ENCODE measurements at regions of chr17 and their contacts with region 1.

Region 1: DNA sequence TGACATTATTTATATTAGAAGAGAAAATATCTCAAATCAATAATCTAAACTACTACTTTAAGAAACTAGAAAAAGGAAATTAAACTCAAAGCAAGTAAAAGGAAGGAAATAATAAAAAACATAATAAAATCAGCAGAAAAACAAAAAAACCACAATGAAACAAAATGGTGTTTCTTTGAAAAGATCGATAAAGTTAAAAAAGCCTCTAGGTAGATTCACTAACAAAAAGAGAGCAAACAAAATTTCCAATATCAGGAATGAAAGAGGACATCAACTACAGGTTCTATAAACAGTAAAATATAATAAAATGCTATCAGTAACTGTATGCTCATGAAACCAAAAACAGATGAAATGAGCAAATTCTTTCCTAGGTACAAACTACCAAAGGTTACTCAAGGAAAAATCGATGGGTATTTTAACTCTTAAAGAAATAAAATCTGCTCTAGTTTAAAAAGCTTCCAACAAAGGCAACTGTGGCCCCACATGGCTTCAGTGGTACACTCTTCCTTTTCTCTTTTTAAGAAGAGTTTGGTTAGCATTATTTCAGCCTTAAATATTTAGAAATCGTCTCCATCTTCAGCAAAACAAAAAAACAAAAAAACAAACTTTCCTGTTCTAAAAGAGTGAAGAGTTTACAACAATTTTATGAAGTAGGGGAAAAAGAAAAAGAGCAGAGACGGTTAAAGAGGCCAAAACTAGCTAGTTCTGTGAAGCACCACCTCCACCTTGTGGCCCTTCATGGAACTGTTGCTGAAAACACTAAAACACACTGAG is 102.2 kb downstream of the TRIM37 start:
- DNase-seq: peak; percentile 63
- H3K4me3 ChIP-seq: no peak overlapping the region; a peak in 1 of 4 replicates
- H3K27ac ChIP-seq: no peak overlapping the region
- H3K4me1 ChIP-seq: peaks cover 0 to 5% of the 10 kb centered on the region in 2 experiments; a peak in 2 of 4 replicates
- H3K27me3 ChIP-seq: no peaks in the 10 kb centered on the region
- CTCF ChIP-seq: peak; percentile 100
- EP300 ChIP-seq: no peak
- RAD21 ChIP-seq: peak; percentile 98

Region 2: DNA sequence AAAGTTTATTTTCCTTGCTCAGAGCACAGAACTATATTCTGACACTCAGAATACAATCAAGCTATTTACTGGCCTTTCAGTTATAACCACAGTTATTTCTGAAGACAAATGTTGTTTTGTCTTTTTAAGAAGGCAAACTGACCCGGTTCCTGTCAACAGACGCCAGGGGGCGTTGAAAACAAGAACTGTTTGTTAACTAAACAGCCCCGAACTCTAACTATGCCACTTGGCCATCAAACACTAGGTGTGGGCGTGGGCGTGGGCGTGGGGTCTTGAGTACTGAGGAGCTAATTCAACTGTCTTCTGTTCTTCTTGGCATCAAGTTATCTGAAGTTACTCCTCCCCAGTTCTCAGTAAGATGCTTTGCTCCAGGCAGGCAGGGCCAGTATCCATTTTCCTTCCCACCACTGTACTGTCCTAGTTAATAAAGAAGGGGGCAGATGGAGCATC is 426.9 kb before region 1 on chr17:
- CTCF ChIA-PET with region 1: interaction called, 66 read pairs
- POLR2A ChIA-PET with region 1: no interaction called
- DNase-seq: peak; percentile 56
- H3K4me3 ChIP-seq: no peak overlapping the region; a peak in 1 of 4 replicates
- H3K27ac ChIP-seq: no peak overlapping the region
- H3K4me1 ChIP-seq: no peaks in the 10 kb centered on the region
- H3K27me3 ChIP-seq: 0 out of 2 replicates have a peak, but pooled peaks cover 4% of the 10 kb centered on the region
- CTCF ChIP-seq: peak; percentile 83
- EP300 ChIP-seq: no peak
- RAD21 ChIP-seq: peak; percentile 59

Region 3: GRCh38 chr17:58703137-58703972 is 301.2 kb before region 1 on chr17:
- CTCF ChIA-PET with region 1: interaction called, 22 read pairs
- POLR2A ChIA-PET with region 1: interaction called, 4 read pairs
- DNase-seq: no peak
- H3K4me3 ChIP-seq: no peak overlapping the region
- H3K27ac ChIP-seq: peak overlapping the region in 1 of 2 experiments; percentile 40; a peak in 2 of 4 replicates
- H3K4me1 ChIP-seq: no peaks in the 10 kb centered on the region
- H3K27me3 ChIP-seq: no peaks in the 10 kb centered on the region
- CTCF ChIP-seq: no peak
- EP300 ChIP-seq: no peak
- RAD21 ChIP-seq: no peak

Region 4: DNA sequence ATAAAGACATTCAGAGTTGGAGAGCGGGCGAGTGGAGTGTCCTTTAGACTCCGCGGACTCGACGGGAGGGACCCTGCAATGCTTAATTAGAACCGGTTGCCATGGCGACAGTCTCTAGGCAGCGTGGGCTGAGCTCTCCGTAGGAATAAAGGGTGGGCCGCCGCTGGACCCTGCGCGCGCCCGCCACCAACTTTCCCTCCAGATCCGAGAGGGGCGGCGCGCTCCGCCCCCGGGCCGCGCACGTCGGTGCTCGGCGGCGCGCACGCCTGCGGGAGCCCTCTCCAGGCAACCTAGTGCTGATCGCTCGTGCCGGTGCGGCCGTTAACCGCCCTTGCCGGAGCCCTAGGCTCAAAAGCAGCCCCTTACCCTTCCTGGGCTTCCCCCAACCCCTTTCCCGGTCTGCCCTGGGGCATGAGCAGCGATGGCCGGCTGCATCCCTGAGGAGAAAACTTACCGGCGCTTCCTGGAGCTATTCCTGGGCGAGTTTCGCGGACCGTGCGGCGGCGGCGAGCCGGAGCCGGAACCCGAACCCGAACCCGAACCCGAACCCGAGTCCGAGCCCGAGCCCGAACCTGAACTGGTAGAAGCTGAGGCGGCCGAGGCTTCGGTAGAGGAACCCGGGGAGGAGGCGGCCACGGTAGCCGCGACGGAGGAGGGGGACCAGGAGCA is 248.8 kb before region 1 on chr17 and contains the start of gene PPM1E:
- CTCF ChIA-PET with region 1: interaction called, 12 read pairs
- POLR2A ChIA-PET with region 1: interaction called, 3 read pairs
- DNase-seq: peak; percentile 98
- H3K4me3 ChIP-seq: peak within 1 kb of the TSS; percentile 74 to 78
- H3K27ac ChIP-seq: peak within 1 kb of the TSS in 1 of 2 experiments; percentile 81; a peak in 2 of 4 replicates
- H3K4me1 ChIP-seq: peaks cover 0 to 11% of the 10 kb centered on the region in 2 experiments; a peak in 2 of 4 replicates
- H3K27me3 ChIP-seq: peaks cover 24% of the 10 kb centered on the region
- CTCF ChIP-seq: no peak
- EP300 ChIP-seq: no peak
- RAD21 ChIP-seq: 0 out of 2 replicates have a peak, but pooled peaks have one; percentile 3
- polyA plus RNA-seq, gene PPM1E: 0.08 and 0.34 TPM in 2 replicates

Region 5: DNA sequence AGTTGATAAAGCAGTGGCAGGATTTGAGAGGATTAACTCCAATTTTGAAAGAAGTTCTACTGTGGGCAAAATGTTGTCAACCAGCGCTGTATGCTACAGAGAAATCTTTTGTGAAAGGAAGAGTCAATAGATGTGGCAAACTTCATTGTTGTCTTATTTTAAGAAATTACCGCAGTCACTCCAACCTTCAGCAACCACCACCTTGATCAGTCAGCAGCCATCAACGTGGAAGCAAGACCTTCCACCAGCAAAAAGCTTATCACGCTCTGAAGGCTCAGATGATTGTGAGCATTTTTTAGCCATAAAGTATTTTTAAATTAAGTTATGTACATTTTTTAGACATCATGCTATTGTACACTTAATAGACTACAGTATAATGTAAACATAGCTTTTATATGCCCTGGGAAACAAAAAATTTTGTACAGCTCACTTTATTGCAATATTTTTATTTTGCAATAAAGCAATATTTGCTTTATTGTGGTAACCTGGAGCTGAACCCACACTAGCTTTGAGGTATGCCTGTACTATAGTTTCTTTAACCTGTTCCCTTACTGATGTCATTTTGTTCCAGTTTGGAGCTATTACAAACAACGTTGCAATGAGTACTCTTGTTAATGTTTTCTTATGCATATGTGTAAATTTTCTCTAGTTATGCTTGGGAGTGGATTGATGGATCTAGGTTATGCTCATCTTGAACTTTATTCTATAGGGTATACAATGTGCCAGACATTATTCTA is 104.2 kb before region 1 on chr17:
- CTCF ChIA-PET with region 1: no interaction called
- POLR2A ChIA-PET with region 1: no interaction called
- DNase-seq: no peak
- H3K4me3 ChIP-seq: no peak overlapping the region
- H3K27ac ChIP-seq: no peak overlapping the region
- H3K4me1 ChIP-seq: no peaks in the 10 kb centered on the region
- H3K27me3 ChIP-seq: no peaks in the 10 kb centered on the region
- CTCF ChIP-seq: no peak
- EP300 ChIP-seq: no peak
- RAD21 ChIP-seq: no peak

Region 6: GRCh38 chr17:59018019-59018418 is 13.5 kb after region 1 on chr17:
- CTCF ChIA-PET with region 1: interaction called, 23 read pairs
- POLR2A ChIA-PET with region 1: no interaction called
- DNase-seq: no peak
- H3K4me3 ChIP-seq: no peak overlapping the region
- H3K27ac ChIP-seq: no peak overlapping the region
- H3K4me1 ChIP-seq: no peaks in the 10 kb centered on the region
- H3K27me3 ChIP-seq: no peaks in the 10 kb centered on the region
- CTCF ChIP-seq: no peak
- EP300 ChIP-seq: no peak
- RAD21 ChIP-seq: no peak

Measured in SK-N-SH (cell line).